Dorsolateral prefrontal cortex (tissue), 120 donors: ENCODE measurements at regions of chr5 and their contacts with region 1.

Region 1: DNA sequence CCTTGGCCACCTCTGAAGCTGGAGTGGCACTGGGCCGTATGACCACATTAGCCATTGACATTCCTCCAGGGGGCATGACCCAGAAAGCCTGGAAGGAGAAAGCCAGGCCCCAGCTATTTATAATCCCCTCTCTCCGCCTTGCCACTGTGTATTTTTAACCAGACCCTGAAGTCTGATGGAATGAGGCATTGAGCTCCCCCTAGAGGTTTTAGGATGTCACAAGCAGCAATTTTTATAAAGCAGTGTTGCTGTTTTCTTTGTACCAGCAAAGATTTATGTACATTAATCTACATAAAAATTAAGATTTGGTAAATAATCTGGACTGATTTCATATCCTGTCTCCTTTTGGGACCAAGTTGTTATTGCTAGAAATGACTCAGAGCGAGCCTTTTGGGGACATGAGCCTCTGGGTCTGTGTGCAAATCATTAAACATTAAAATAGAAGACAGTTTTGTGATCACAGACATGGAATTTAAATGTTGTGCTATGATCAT is 127.1 kb downstream of the TRIO start:
- DNase-seq: peak in 1 of 10 donors; percentile 63
- H3K4me3 ChIP-seq: no peak overlapping the region
- H3K27ac ChIP-seq: peak overlapping the region in 36 of 59 donors; percentile 1 to 73 (median 46)
- H3K27me3 ChIP-seq: peaks cover 0 to 4% (median 0%) of the 10 kb centered on the region in 45 donors
- CTCF ChIP-seq: peak; percentile 68 to 89 (median 82)

Region 2: DNA sequence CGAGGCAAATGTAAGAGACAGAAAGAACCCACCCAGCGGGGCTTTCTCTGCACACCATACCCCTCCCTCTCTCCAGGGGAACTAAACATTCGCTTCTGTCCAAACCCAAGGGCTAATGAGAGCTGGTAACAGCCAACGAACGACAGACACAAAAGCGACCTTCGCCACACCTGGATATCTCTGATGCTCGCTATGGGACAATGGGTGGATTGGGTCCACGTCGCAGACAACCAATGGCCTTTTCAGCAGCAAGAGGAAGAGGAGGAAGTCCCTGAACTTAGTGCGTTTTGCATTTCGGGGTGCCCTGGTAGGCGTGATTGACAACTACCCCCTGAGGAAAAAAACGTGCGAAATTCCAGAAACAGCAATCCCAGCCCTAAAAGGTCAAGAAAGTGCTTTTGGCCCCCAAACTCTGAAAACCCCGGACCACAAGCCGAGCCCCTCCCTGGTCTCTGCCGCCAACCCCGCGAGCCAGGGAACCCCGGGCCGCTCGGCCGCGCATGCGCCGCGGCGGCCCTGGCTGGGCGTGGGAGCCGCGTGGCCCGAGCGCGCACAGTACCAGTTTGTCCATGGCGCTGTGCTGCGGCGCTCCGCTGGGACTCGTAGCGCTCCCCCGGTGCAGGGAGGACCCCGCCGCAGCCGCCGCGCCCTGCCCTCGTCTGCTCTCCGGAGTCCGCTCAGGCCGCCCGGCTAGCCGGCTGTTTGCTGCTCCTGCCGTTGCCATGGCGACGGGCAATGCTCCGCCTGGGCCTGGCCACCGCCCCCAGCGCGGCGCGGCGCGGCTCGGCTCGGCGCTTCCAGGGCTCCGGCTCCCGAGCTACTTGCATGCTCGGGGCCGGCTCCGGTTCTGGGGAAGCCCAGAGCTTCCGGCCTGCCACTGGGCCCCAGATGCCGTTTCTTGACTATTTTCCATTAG is 258.9 kb before region 1 on chr5:
- intact Hi-C with region 1: loop called (anchors 10 kb)
- DNase-seq: peak; percentile 56 to 88 (median 81)
- H3K4me3 ChIP-seq: peak overlapping the region; percentile 37 to 76 (median 65)
- H3K27ac ChIP-seq: peak overlapping the region in 49 of 59 donors; percentile 0 to 84 (median 59)
- H3K27me3 ChIP-seq: no peaks in the 10 kb centered on the region
- CTCF ChIP-seq: peak in 36 of 56 donors; percentile 6 to 55 (median 30)

Region 3: GRCh38 chr5:14108170-14108996 is 161.9 kb before region 1 on chr5:
- intact Hi-C with region 1: loop called in 1 of 2 experiments (anchors 2 kb)
- DNase-seq: peak in 6 of 10 donors; percentile 31 to 49 (median 45)
- H3K4me3 ChIP-seq: peak overlapping the region in 27 of 59 donors; percentile 3 to 49 (median 30)
- H3K27ac ChIP-seq: no peak overlapping the region
- H3K27me3 ChIP-seq: peaks cover 0 to 5% (median 0%) of the 10 kb centered on the region in 45 donors
- CTCF ChIP-seq: peak; percentile 51 to 80 (median 70)